AG04449 (cell line): ENCODE measurements at regions of chr2 and their contacts with region 1.

Region 1: GRCh38 chr2:84925724-84926376 is 20.4 kb downstream of the TMSB10 start:
- DNase-seq: no peak
- H3K4me3 ChIP-seq: peak overlapping the region; percentile 58
- CTCF ChIP-seq: peak; percentile 93

Region 2: DNA sequence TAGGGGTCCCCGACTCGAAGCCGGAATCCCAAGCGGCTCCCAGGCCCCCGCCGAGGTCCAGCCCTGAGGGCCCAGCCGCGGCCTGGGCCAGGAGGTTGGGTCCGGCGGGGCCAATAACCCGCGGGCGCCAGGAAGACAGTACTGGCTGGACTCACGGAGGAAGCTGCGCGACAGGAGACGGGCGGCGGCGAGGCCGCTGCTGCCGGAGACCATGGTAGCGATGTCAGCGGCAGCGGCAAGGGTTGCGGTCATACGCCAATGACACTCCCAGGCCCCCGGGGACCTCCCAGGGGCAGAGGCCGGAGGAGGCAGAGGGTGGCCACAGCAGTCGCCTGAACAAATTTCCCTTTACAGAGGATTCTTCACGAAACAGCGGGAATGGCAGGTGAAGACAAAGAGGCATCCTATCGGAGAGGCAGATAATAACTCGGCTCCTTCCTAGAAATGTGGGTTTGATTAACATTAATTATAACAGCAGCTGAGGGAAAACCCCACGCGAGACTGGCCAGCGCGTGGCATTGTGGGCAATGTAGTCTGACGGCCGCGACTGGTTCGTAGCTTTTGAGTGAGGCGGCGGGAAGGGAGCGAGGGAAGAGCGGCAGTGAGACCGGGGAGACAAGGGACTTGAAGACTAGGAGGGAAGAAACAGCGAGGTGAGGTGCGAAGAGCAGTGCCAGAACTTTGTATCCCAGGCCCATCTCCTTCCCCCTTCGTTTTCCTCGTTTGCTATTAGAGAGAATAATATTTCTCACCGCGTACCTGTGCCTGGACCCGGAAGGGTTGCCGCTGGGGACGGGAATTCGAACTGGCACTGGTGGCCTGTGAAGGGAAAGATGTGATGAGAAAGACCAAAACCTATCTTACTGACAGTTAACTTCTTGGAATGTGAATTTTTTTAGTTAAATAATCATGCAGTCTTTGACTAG is 466.6 kb before region 1 on chr2 and contains the start of gene SUCLG1:
- CTCF ChIA-PET with region 1: interaction called, 11 read pairs
- POLR2A ChIA-PET with region 1: no interaction called
- DNase-seq: no peak
- H3K4me3 ChIP-seq: peak within 1 kb of the TSS; percentile 93
- CTCF ChIP-seq: no peak

Region 3: DNA sequence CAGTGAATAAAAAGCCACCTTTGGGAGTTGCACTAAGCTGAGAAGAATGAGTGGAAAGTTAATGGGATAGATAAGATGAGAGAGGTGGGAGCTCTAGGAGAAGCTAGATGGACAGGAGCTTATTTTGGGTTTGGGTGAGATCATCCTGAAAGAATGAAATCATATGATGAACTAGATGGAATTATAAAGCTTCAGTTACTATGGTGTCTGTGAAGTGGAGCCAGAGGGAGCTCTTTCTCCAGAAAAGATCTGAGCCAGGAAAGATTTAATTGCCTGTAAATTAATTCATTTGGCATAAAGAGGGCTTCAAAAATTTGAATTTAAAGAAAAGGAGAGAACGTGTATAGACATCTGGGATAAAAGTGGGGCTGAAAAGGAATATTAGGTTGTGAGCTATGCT is 399.3 kb before region 1 on chr2:
- CTCF ChIA-PET with region 1: interaction called, 10 read pairs
- POLR2A ChIA-PET with region 1: no interaction called
- DNase-seq: no peak
- H3K4me3 ChIP-seq: no peak overlapping the region
- CTCF ChIP-seq: no peak

Region 4: DNA sequence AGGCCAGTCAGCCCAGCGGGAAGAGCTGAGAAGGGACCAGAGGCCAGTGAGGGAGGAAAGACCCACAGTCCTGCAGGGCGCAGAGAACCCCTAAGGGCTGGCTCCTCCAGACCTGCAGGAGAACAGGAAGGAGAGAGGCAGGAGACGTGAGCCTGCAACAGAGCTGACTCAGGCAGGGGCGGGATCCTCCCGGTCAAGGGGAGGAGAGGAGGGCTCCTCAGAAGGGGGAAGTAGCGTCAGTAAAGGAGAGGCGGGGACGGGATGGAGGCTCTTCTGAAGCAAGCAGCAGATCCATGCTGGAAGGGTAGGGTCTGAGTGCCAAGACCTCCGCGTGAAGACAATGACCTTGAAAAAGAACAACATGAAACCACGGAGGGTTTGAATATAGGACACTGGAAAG is 95.8 kb before region 1 on chr2:
- CTCF ChIA-PET with region 1: no interaction called
- POLR2A ChIA-PET with region 1: no interaction called
- DNase-seq: no peak
- H3K4me3 ChIP-seq: no peak overlapping the region
- CTCF ChIP-seq: no peak

Region 5: GRCh38 chr2:84894758-84895520 is 30.9 kb before region 1 on chr2:
- CTCF ChIA-PET with region 1: interaction called, 33 read pairs
- POLR2A ChIA-PET with region 1: interaction called, 3 read pairs
- DNase-seq: no peak
- H3K4me3 ChIP-seq: no peak overlapping the region
- CTCF ChIP-seq: no peak

Region 6: GRCh38 chr2:84939426-84940087 is 13.7 kb after region 1 on chr2:
- CTCF ChIA-PET with region 1: interaction called, 125 read pairs
- POLR2A ChIA-PET with region 1: no interaction called
- DNase-seq: no peak
- H3K4me3 ChIP-seq: no peak overlapping the region
- CTCF ChIP-seq: no peak

Region 7: GRCh38 chr2:84969511-84970209 is 43.8 kb after region 1 on chr2:
- CTCF ChIA-PET with region 1: interaction called, 22 read pairs
- POLR2A ChIA-PET with region 1: no interaction called
- DNase-seq: no peak
- H3K4me3 ChIP-seq: peak overlapping the region; percentile 73
- CTCF ChIP-seq: no peak

Region 8: DNA sequence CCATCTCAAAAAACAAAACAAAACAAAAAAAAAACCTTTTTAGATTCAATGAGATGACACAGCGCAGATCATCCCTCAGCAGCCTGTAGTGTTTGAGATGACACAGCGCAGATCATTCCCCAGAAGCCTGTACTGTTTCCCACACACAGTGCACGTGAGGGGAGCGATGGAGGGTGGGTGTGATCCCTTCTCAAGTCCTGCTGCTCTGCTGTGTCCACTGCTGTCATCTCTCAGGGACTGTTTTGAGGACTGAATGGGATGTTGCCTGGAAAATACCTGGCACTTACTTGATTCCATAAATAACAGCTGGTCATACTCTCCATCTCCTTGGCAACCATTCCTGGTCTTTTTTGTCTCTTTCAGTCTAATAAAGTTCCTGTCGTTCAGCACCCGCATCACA is 376.3 kb after region 1 on chr2:
- CTCF ChIA-PET with region 1: interaction called, 35 read pairs
- POLR2A ChIA-PET with region 1: no interaction called
- DNase-seq: no peak
- H3K4me3 ChIP-seq: no peak overlapping the region
- CTCF ChIP-seq: no peak